B cell (primary cell): ENCODE measurements at regions of chr10 and their contacts with region 1.

Region 1: DNA sequence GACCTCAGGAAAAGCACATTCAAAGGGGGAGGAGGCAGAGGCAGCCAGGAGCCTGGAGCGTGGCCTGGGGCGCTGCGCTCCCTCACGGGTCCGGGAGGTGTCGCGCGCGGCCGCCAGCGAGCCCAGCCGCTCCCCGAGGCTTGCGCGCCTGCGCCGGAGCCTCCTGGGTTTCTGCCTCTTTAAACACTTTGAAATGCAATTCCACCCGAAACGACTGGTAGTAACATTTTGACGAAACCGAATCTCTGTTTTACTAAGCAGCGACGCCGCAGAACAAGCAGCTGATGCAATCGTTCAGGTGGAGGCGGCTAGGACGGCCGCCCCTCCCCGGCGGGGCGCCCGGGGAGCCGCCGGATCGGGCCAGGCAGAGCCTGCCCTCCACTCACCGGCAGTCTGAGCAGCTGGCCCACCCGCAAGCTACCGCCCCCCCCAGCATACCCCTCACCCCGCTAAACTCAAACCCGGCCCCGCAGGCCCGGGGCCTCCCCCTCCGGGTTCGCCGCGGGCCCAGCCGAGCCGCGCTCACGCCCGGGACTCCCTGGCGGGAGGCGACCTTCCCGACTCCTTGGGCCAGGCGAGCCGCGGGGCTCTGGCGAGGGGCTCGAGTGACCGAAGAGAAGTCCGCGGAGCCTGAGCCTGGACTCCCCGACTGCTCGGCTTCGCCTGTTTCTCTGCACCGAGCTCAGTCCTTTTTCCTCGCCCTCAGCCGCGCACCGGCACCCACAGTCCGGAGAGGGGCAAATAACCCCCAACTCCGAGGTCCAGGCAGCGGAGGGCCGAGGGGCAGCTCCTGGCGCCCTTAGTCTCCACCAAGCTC is 3.2 kb downstream of the MKX start:
- DNase-seq: peak; percentile 67
- ATAC-seq: peak; percentile 86
- H3K4me3 ChIP-seq: peak overlapping the region; percentile 32 to 64 (median 55)
- H3K4me3 Mint-ChIP-seq: peak overlapping the region; percentile 78
- H3K27ac ChIP-seq: no peak overlapping the region
- H3K27ac Mint-ChIP-seq: no peak overlapping the region
- H3K4me1 ChIP-seq: peaks cover 39 to 60% of the 10 kb centered on the region in 2 donors
- H3K4me1 Mint-ChIP-seq: peaks cover 25% of the 10 kb centered on the region
- H3K27me3 ChIP-seq: peaks cover 0 to 69% (median 45%) of the 10 kb centered on the region in 4 experiments
- H3K27me3 Mint-ChIP-seq: peaks cover 53% of the 10 kb centered on the region
- CTCF ChIP-seq: peak; percentile 58

Region 2: GRCh38 chr10:27658788-27659187 is 83.6 kb before region 1 on chr10:
- CTCF ChIA-PET with region 1: no interaction called
- POLR2A ChIA-PET with region 1: no interaction called
- intact Hi-C with region 1: no loop called
- DNase-seq: no peak
- ATAC-seq: no peak
- H3K4me3 ChIP-seq: no peak overlapping the region
- H3K4me3 Mint-ChIP-seq: no peak overlapping the region
- H3K27ac ChIP-seq: no peak overlapping the region
- H3K27ac Mint-ChIP-seq: no peak overlapping the region
- H3K4me1 ChIP-seq: no peaks in the 10 kb centered on the region
- H3K4me1 Mint-ChIP-seq: no peaks in the 10 kb centered on the region
- H3K27me3 ChIP-seq: peaks cover 0 to 4% (median 0%) of the 10 kb centered on the region in 4 experiments
- H3K27me3 Mint-ChIP-seq: peaks cover 18% of the 10 kb centered on the region
- CTCF ChIP-seq: no peak

Region 3: GRCh38 chr10:27680006-27680557 is 62.3 kb before region 1 on chr10:
- CTCF ChIA-PET with region 1: no interaction called
- POLR2A ChIA-PET with region 1: no interaction called
- intact Hi-C with region 1: no loop called
- DNase-seq: no peak
- ATAC-seq: no peak
- H3K4me3 ChIP-seq: no peak overlapping the region
- H3K4me3 Mint-ChIP-seq: no peak overlapping the region
- H3K27ac ChIP-seq: no peak overlapping the region
- H3K27ac Mint-ChIP-seq: no peak overlapping the region
- H3K4me1 ChIP-seq: no peaks in the 10 kb centered on the region
- H3K4me1 Mint-ChIP-seq: no peaks in the 10 kb centered on the region
- H3K27me3 ChIP-seq: no peaks in the 10 kb centered on the region
- H3K27me3 Mint-ChIP-seq: peaks cover 7% of the 10 kb centered on the region
- CTCF ChIP-seq: no peak

Region 4: DNA sequence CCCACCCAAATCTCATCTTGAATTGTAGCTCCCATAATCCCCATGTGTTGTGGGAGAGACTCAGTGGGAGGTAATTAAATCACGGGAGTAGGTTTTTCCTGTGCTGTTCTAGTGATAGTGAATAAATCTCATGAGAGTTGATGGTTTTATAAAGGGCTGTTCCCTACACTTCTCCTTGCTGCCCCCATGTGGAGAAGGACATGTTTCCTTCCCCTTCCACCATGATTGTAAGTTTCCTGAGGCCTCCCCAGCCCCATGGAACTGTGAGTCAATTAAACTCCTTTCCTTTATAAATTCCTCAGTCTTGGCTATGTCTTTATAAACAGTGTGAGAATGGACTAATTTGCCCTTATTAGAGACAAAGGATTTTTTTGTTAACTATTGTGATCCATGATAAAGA is 51.8 kb after region 1 on chr10:
- CTCF ChIA-PET with region 1: no interaction called
- POLR2A ChIA-PET with region 1: no interaction called
- intact Hi-C with region 1: no loop called
- DNase-seq: no peak
- ATAC-seq: no peak
- H3K4me3 ChIP-seq: no peak overlapping the region
- H3K4me3 Mint-ChIP-seq: no peak overlapping the region
- H3K27ac ChIP-seq: no peak overlapping the region
- H3K27ac Mint-ChIP-seq: no peak overlapping the region
- H3K4me1 ChIP-seq: no peaks in the 10 kb centered on the region
- H3K4me1 Mint-ChIP-seq: no peaks in the 10 kb centered on the region
- H3K27me3 ChIP-seq: no peaks in the 10 kb centered on the region
- H3K27me3 Mint-ChIP-seq: peaks cover 10% of the 10 kb centered on the region
- CTCF ChIP-seq: no peak

Region 5: DNA sequence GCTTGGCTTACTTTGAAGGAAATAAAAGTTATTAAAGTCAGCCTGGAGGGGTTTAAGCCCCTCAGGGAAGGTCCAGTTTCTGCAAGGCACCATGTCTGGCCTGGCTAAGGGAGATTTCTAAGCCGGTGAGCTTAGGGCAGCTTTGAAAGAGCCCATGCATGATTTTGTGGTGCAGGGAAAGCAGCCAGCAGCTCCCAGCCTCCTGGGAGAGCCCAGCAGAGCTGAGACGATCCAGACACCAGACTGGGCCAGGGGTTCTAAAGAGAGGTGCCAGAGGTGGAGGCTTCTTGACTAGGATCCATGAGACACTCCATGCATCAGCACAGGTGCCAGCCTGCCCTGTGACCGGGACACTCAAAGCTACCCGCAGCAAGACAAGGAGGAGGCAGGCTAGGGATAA is 62.8 kb after region 1 on chr10:
- CTCF ChIA-PET with region 1: no interaction called
- POLR2A ChIA-PET with region 1: no interaction called
- intact Hi-C with region 1: no loop called
- DNase-seq: no peak
- ATAC-seq: no peak
- H3K4me3 ChIP-seq: no peak overlapping the region
- H3K4me3 Mint-ChIP-seq: no peak overlapping the region
- H3K27ac ChIP-seq: no peak overlapping the region
- H3K27ac Mint-ChIP-seq: no peak overlapping the region
- H3K4me1 ChIP-seq: no peaks in the 10 kb centered on the region
- H3K4me1 Mint-ChIP-seq: no peaks in the 10 kb centered on the region
- H3K27me3 ChIP-seq: peaks cover 0 to 4% (median 0%) of the 10 kb centered on the region in 4 experiments
- H3K27me3 Mint-ChIP-seq: peaks cover 4% of the 10 kb centered on the region
- CTCF ChIP-seq: no peak

Region 6: GRCh38 chr10:28241741-28242399 is 499.5 kb after region 1 on chr10:
- CTCF ChIA-PET with region 1: interaction called, 4 read pairs
- POLR2A ChIA-PET with region 1: no interaction called
- intact Hi-C with region 1: loop called (anchors 5 kb)
- DNase-seq: peak; percentile 58
- ATAC-seq: peak; percentile 64
- H3K4me3 ChIP-seq: no peak overlapping the region
- H3K4me3 Mint-ChIP-seq: no peak overlapping the region
- H3K27ac ChIP-seq: no peak overlapping the region
- H3K27ac Mint-ChIP-seq: no peak overlapping the region
- H3K4me1 ChIP-seq: no peaks in the 10 kb centered on the region
- H3K4me1 Mint-ChIP-seq: peaks cover 2% of the 10 kb centered on the region
- H3K27me3 ChIP-seq: no peaks in the 10 kb centered on the region
- H3K27me3 Mint-ChIP-seq: peaks cover 22% of the 10 kb centered on the region
- CTCF ChIP-seq: peak; percentile 99